RWPE1 (cell line): ENCODE measurements at regions of chrX and their contacts with region 1.

Region 1: GRCh38 chrX:130120746-130121504 is 10.6 kb upstream of the ELF4 start:
- DNase-seq: peak; percentile 70
- H3K27ac ChIP-seq: peak overlapping the region; percentile 86
- CTCF ChIP-seq: peak; percentile 71

Region 2: DNA sequence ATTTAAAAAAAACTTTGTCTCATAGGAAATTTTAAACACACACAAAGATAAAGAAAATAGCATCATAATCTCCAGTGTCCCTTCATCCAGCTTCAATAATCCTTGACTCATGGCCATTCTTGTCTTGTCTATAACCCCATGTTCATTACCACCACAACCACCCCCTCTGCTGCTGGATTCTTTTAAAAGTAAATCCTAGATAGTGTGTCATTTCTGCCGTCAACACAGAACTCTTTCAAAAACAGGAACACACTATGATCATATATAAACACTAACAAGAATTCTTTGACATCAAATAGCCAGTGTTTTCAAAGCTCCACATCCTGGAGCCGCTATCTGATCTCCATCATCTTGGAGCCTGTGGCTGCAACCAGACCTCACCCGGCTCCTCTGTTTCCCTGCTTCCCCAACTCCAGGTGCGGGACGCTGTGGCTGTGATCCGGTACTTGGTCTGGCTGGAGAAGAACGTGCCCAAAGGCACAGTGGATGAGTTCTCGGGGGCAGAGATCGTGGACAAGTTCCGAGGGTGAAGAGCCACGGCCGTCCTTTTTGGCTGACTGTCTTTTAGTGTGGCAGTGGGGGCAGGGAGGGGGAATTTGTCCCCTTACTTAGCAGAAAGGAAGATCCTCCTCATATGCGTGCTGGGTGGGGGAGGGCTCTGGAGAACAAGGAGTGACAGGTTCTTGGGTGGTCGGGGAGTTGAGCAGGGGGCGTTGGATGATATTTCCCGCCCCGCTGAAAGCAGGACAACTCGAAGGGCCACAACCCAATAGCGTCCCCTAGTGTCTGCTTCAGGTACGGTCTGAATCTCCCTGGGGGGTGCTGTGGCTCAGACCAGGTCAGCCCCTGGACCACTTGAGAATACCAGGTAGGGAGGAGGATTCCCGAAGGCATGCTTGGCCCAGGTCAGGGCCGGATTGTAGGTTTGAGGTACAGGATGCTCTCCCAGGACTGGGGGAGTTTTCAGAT is 366.6 kb before region 1 on chrX:
- CTCF ChIA-PET with region 1: no interaction called
- POLR2A ChIA-PET with region 1: interaction called, 12 read pairs
- DNase-seq: no peak
- H3K27ac ChIP-seq: no peak overlapping the region
- CTCF ChIP-seq: no peak

Region 3: GRCh38 chrX:130079824-130080406 is 41.0 kb before region 1 on chrX:
- CTCF ChIA-PET with region 1: interaction called, 6 read pairs
- POLR2A ChIA-PET with region 1: interaction called, 14 read pairs
- DNase-seq: peak; percentile 49
- H3K27ac ChIP-seq: peak overlapping the region; percentile 53; the same call in 1 of the 2 replicates
- CTCF ChIP-seq: peak; percentile 70